ENCODE measurements at regions of chr21 and their contacts with region 1.

Region 1: GRCh38 chr21:42258153-42258884 is 39.4 kb downstream of the ABCG1 start:
- DNase-seq: peak; percentile 81
- H3K4me3 ChIP-seq: no peak overlapping the region
- H3K27ac ChIP-seq: no peak overlapping the region
- H3K4me1 ChIP-seq: peaks cover 4% of the 10 kb centered on the region
- H3K27me3 ChIP-seq: no peaks in the 10 kb centered on the region
- CTCF ChIP-seq: peak; percentile 96

Region 2: GRCh38 chr21:42145569-42146272 is 112.6 kb before region 1 on chr21:
- CTCF ChIA-PET with region 1: interaction called, 12 read pairs
- POLR2A ChIA-PET with region 1: no interaction called
- intact Hi-C with region 1: loop called (anchors 1 kb)
- DNase-seq: peak; percentile 70
- H3K4me3 ChIP-seq: no peak overlapping the region
- H3K27ac ChIP-seq: no peak overlapping the region
- H3K4me1 ChIP-seq: no peaks in the 10 kb centered on the region
- H3K27me3 ChIP-seq: no peaks in the 10 kb centered on the region
- CTCF ChIP-seq: peak; percentile 89

Region 3: GRCh38 chr21:42164064-42164789 is 94.1 kb before region 1 on chr21:
- CTCF ChIA-PET with region 1: interaction called, 11 read pairs
- POLR2A ChIA-PET with region 1: no interaction called
- intact Hi-C with region 1: loop called (anchors 5 kb)
- DNase-seq: peak; percentile 25
- H3K4me3 ChIP-seq: no peak overlapping the region
- H3K27ac ChIP-seq: no peak overlapping the region
- H3K4me1 ChIP-seq: no peaks in the 10 kb centered on the region
- H3K27me3 ChIP-seq: no peaks in the 10 kb centered on the region
- CTCF ChIP-seq: peak; percentile 65

Measured in A673 (cell line).